ENCODE measurements at regions of chr17 and their contacts with region 1.

Region 1: DNA sequence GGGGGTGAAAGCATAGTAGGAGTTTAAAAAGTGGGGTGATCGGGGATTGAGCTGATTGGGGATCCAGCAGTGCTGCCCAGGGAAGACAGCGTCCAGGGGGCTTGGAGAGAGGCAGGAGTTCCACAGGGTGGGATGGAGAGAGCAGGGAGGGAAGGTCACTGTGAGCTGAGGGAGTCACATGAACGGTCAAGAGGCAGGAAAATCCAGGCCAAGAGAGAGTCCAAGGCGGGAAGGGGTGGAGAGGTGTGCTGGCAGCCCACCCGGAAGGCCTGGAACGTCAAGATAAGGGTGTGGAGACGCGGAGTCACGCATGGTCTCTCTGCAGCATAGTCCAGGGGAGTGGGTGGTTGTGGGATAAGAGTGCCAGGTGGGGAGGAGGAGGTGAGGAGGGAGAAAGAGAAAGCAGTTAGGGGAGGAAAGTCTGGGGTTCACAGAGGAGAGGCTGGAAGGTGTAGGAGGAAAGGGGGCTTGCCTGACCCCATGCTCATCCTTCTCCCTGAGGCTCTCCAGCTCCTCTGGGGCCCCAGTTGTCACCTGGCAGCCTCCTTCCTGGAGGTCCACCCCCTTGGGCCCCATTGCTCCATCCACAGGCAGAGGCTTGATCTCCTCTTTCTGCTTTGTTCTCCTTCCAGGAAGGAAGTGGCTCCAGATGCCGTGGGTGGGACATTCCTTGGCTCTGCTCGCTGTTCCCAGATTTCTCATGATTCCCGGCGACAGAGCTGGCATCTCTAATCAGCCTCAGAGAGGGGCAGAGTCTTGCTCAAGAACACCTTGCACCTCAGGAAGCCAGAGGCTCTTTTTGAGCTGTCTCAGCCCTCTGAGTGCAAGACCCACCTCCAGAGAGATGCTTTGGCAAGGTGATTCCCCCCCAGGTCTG is 28.7 kb downstream of the CCR7 start:
- DNase-seq: no peak
- ATAC-seq: no peak
- H3K4me3 ChIP-seq: no peak overlapping the region
- H3K27ac ChIP-seq: no peak overlapping the region
- H3K4me1 ChIP-seq: peaks cover 64% of the 10 kb centered on the region
- H3K27me3 ChIP-seq: no peaks in the 10 kb centered on the region; a peak in 1 of 4 replicates
- CTCF ChIP-seq: no peak
- EP300 ChIP-seq: no peak
- POLR2A ChIP-seq: no peak
- RAD21 ChIP-seq: no peak

Region 2: DNA sequence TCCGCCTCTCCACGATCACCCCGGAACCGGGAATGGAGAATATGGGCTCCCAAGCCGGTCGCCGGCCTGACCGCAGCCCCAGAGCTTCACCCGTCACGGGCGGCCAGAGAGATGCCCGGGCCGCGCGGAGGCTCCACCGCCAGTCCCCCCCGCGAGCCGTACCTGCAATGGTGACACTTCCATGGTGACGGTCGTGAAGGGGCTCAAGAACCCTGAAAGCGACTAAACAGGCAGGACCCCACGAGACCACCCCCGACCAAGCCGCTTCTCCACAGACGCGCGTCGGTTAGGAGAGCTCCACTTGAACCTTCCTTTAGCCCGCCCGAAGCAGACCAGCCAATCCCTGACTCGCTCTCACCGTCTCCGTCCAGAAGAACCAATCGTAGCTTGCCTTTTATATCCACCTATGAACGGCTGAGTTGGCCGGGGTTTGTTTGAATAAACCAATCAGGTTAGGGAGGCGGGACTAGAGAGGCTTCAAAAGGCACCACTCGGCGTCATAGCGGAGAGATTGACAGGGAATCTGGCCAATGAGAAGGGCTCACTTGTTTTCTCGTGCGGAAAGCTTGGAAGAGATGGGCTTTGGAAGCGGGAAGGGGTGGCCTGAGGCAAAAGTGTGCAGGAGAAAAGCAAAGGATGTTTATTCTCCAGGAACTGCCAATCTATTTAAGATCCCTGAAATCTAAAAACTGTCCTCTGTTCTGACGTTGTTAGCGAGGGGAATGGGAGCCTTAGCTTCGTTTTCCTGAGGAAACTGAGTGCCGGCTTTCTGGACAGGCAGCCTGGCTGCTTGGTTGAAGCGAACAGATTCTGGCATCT is 118.7 kb before region 1 on chr17 and contains the start of gene TOP2A:
- CTCF ChIA-PET with region 1: interaction called, 86 read pairs
- POLR2A ChIA-PET with region 1: interaction called, 21 read pairs
- RAD21 ChIA-PET with region 1: interaction called, 88 read pairs
- SMC1A ChIA-PET with region 1: interaction called, 106 read pairs
- in situ Hi-C with region 1: no loop called
- intact Hi-C with region 1: no loop called
- DNase-seq: peak; percentile 99
- ATAC-seq: peak; percentile 97
- H3K4me3 ChIP-seq: peak within 1 kb of the TSS; percentile 94
- H3K27ac ChIP-seq: peak within 1 kb of the TSS; percentile 62
- H3K4me1 ChIP-seq: no peaks in the 10 kb centered on the region; the same call in 1 of the 2 replicates
- H3K27me3 ChIP-seq: no peaks in the 10 kb centered on the region; a peak in 1 of 4 replicates
- CTCF ChIP-seq: no peak
- EP300 ChIP-seq: no peak
- POLR2A ChIP-seq: peak; percentile 91
- RAD21 ChIP-seq: no peak
- polyA plus RNA-seq, gene TOP2A: 149 to 236 TPM

Region 3: DNA sequence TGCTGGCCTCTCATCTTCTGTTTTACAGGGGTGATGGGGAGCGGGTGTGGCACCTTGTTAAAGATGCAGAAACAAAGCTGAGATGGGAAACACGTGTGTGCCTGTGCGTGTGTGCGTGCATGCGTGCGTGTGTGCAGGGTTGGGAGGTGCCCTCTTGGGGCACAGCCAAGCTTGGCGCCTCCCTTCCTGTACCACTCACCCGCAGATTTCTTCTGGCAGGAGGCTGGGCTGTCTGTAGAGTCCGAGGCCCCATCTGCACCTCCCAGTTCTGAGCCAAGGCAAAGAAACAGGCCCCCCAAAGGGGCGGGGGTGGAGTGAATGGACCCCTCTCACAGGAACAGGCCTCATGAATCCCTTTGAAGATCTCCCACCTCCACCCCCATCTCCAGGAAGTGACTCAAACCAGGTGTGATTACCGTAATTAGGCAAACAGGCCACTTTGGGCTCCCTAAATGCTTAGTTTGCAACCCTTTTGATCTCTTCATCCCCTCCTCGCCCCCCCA is 56.0 kb before region 1 on chr17:
- CTCF ChIA-PET with region 1: interaction called, 128 read pairs
- POLR2A ChIA-PET with region 1: interaction called, 12 read pairs
- RAD21 ChIA-PET with region 1: interaction called, 131 read pairs
- SMC1A ChIA-PET with region 1: interaction called, 108 read pairs
- in situ Hi-C with region 1: no loop called
- intact Hi-C with region 1: loop called (anchors 1 kb)
- DNase-seq: peak; percentile 8
- ATAC-seq: peak; percentile 81
- H3K4me3 ChIP-seq: no peak overlapping the region
- H3K27ac ChIP-seq: no peak overlapping the region
- H3K4me1 ChIP-seq: peaks cover 15% of the 10 kb centered on the region
- H3K27me3 ChIP-seq: no peaks in the 10 kb centered on the region
- CTCF ChIP-seq: no peak
- EP300 ChIP-seq: peak in 1 of 2 experiments; percentile 65; a peak in 1 of 4 replicates
- POLR2A ChIP-seq: no peak
- RAD21 ChIP-seq: no peak

Region 4: DNA sequence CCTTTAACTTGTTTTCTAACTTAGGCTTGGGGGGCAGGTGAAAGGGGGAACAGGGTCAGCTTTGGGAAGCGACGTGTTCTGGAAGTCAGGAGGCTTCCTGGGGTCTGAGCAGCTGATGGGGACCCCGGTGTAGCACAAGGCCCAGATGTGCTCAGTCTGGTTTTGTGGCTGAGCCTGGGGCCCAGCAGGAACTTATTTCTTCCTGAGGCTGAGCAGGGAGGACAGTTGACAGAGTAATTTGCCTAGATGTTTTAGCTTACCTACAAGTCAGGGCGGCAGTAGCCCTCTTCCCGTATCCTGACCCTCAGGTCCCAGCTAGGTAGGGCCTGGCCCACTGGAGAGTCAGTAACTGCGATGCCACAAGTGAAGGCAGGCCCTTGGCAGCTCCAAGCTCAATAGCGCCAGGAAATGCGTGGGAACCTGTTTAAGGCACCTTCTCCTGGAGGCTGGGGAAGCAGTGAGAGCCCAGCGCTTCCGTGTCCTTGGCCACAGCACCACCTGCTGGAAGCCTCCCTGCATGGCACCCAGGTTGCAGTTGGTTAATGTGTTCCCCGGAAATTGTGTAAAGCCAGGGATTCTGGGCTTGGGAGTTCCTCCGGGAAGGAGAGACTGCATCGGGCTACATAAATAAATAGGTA is 23.5 kb after region 1 on chr17:
- CTCF ChIA-PET with region 1: interaction called, 318 read pairs
- POLR2A ChIA-PET with region 1: interaction called, 63 read pairs
- RAD21 ChIA-PET with region 1: interaction called, 514 read pairs
- SMC1A ChIA-PET with region 1: interaction called, 430 read pairs
- in situ Hi-C with region 1: no loop called
- intact Hi-C with region 1: loop called (anchors 2 kb)
- DNase-seq: peak; percentile 72
- ATAC-seq: peak; percentile 5
- H3K4me3 ChIP-seq: peak overlapping the region; percentile 70
- H3K27ac ChIP-seq: peak overlapping the region; percentile 98
- H3K4me1 ChIP-seq: peaks cover 33% of the 10 kb centered on the region
- H3K27me3 ChIP-seq: no peaks in the 10 kb centered on the region
- CTCF ChIP-seq: peak; percentile 91 to 97 (median 94)
- EP300 ChIP-seq: no peak
- POLR2A ChIP-seq: no peak; the same call in 1 of the 2 replicates
- RAD21 ChIP-seq: peak; percentile 90

Region 5: GRCh38 chr17:40632216-40632615 is 95.7 kb after region 1 on chr17:
- CTCF ChIA-PET with region 1: no interaction called
- POLR2A ChIA-PET with region 1: no interaction called
- RAD21 ChIA-PET with region 1: no interaction called
- SMC1A ChIA-PET with region 1: no interaction called
- in situ Hi-C with region 1: no loop called
- intact Hi-C with region 1: no loop called
- DNase-seq: no peak
- ATAC-seq: no peak
- H3K4me3 ChIP-seq: no peak overlapping the region
- H3K27ac ChIP-seq: no peak overlapping the region
- H3K4me1 ChIP-seq: no peaks in the 10 kb centered on the region
- H3K27me3 ChIP-seq: no peaks in the 10 kb centered on the region
- CTCF ChIP-seq: no peak
- EP300 ChIP-seq: no peak
- POLR2A ChIP-seq: no peak
- RAD21 ChIP-seq: no peak